Left cardiac atrium (tissue), 4 donors: ENCODE measurements at regions of chr5 and their contacts with region 1.

Region 1: GRCh38 chr5:172697123-172698121 is 56.4 kb downstream of the NEURL1B start:
- DNase-seq: peak; percentile 92
- ATAC-seq: peak; percentile 67 to 77

Region 2: DNA sequence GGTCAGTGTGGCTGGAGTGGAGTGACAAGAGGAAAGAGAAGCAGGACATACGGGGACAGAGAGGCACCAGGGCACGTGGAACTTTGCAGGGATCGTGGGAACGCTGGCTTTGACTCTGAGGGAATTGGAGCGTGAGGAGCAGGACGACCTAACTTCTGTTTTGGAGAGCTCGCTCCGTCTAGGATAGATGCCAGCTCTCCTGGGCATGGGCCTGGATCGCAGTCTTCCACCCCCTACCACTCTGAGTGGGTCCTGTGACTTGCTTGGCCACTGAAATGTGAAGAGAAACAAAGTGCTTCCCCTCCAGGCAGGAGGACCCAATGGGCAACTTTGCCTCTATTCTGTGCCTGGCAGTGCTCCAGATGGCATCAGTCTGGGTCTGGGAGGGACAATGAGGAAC is 234.4 kb before region 1 on chr5:
- intact Hi-C with region 1: loop called in 1 of 2 experiments (anchors 5 kb)
- DNase-seq: no peak
- ATAC-seq: no peak

Region 3: DNA sequence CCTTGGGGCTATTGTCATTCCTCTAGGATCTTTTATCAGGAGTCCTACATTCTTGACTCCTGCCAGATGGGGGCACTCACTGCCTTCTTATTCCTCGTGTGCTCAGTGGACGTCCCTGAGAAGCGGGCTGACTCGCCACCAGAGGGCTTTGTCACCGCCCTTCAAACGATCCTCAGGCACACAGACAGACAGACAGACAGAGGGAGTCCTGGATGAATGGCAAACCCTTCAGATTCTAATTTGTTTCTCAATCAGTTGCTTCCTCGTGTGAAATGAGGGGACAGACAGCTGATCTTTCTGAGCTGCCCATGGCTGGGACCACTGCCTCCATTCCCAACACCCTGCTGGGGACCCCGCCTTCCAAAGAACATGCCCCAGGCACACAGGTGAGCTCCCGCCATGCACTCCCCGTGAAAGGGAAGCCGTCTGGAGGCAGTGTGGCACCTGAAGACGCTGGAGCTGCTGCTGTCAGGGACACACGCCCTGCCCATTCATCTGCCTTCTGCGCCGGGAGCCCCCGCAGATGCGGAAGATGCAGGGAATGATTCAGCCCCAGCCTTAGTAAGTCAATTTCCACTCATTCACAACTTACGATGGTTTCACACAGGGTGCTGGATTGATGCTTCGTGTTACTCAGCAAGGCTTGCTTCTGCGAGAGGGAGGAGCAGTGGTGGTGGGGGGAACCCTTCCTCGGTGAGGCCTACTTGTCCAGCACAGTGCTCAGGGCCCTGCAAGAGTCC is 218.2 kb before region 1 on chr5:
- intact Hi-C with region 1: loop called (anchors 1 to 5 kb)
- DNase-seq: peak; percentile 90
- ATAC-seq: peak; percentile 96 to 97

Region 4: GRCh38 chr5:172559004-172559932 is 138.2 kb before region 1 on chr5:
- intact Hi-C with region 1: no loop called
- DNase-seq: peak; percentile 52
- ATAC-seq: peak; percentile 56 to 75

Region 5: GRCh38 chr5:172640822-172641358 is 56.5 kb before region 1 on chr5 and contains the start of gene NEURL1B:
- intact Hi-C with region 1: loop called in 1 of 2 experiments (anchors 5 kb)
- DNase-seq: peak; percentile 86
- ATAC-seq: peak; percentile 91 to 92
- total RNA-seq, gene NEURL1B: 20.6 to 33.6 TPM

Region 6: DNA sequence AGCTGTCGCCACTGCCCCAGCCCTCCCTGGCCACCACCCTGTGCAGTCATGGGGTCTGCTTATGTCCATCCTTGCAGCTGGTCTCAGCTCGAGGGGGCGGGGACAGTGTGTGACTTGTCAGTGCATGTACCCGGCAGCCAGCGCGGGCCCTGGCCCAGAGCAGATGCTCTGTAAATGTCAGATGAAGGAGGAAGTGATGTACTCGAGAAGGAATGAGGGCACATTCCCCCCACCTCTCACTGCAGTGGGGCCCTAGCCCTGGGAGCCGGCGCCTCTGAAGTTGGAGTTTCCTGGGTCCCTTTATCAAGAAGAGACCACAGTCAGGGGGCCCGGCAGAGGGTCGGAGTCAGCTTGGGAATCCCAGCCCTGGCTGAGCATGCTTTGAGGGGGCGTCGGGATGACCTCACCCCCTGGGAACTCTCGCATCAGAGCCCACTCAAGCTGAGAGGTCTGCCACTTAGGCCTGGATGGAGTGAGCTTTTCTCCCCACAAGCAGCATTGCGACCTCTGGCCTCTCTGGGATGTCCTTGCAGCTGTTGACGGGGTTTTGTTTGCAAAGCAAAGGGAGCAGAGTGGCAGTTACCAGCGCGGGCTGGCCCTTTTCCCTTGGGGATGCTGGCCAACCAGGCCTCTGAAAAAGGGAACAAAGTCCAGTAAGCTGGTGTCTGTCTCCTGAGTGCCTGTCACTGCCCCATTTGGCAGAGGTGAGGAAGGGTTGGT is 37.4 kb before region 1 on chr5:
- intact Hi-C with region 1: loop called (anchors 2 to 5 kb)
- DNase-seq: peak; percentile 93
- ATAC-seq: peak; percentile 90 to 94

Region 7: GRCh38 chr5:172984243-172984953 is 287.0 kb after region 1 on chr5:
- intact Hi-C with region 1: no loop called
- DNase-seq: peak; percentile 78
- ATAC-seq: peak; percentile 69 to 75

Region 8: DNA sequence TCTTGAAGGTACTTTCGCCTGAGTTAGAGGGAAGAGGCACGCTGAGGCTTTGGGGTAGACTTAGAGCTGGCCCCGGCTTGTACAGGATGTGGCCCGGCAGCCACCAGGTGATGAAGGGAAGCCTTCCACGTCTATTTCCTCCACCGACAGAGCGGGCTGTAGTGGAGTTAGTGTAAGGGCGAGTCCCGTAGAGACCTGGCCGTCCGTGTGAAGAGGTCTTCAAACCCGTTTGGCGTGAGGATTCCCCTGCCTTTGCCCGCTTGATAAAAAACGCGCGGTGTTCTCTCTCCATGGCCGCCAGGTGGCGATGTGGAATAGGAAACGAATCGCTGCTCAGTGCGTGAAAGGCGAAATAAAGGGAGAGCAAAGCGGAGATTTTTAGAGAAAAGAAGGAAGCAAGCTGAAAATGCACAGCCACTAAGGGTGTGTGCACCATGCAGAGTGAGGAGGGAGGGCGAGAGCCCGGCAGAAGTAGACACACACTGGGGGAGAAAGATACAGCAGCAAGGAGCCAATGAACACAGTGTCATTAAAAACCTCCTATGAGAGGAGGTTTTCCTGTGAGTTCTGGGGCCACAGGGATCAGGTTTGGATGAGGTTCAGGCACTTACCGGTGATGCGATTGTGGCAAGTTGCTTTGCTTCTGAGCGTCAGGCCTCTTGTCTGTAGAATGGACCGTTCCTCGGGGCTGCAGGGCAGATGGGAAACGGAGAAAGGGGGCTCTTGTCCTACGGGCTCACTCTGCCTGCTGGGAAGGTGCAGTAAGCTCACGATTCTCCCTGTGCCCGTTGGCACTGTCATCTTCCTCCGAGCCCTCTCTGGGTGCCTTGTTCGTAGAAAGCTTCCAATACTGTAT is 596.6 kb after region 1 on chr5:
- intact Hi-C with region 1: loop called in 1 of 2 experiments (anchors 5 kb)
- DNase-seq: peak; percentile 78
- ATAC-seq: peak; percentile 48 to 67